CD4-positive, alpha-beta memory T cell (primary cell): ENCODE measurements at regions of chr4 and their contacts with region 1.

Region 1: DNA sequence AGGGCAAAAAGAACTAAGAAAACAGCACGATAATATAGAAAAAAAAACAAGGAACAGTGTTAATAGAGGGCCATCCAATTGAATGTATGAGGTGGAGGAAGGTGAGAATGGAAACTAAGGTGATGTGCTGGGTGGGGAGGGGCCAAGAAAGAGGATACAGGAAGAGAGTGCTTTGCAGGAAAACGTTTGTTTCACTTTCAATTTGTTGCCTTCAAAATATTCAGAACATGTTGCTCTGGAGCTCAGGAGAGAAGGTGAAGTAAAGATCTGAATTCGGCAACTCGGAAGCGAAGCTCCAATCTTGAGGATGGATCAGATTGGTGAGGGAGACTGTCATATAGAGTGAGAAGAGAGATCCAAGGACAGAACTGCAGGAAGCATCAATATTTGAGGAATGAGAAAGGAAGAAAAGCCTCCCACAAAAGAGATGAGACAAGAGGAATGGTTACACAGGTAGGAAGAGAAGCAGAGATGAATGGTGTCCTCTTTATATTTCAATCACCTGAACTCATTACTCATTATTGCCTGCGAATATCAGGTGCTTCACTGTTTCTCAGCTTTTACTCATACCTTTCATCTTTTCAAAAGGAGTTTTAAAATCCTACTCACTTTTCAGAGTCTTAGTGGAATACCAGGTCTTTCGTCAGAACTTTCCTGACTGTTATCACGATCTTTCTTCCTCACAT is 14.7 kb upstream of the SEC24D start:
- DNase-seq: peak; percentile 54 to 72 (median 66)
- H3K4me3 ChIP-seq: peak overlapping the region; percentile 63 to 72
- H3K4me3 Mint-ChIP-seq: peak overlapping the region; percentile 94 to 97 (median 96)
- H3K27ac ChIP-seq: peak overlapping the region; percentile 75
- H3K27ac Mint-ChIP-seq: peak overlapping the region; percentile 83 to 98 (median 96)
- H3K4me1 ChIP-seq: peaks cover 18% of the 10 kb centered on the region
- H3K4me1 Mint-ChIP-seq: peaks cover 19 to 34% (median 26%) of the 10 kb centered on the region in 4 donors
- H3K27me3 ChIP-seq: no peaks in the 10 kb centered on the region
- H3K27me3 Mint-ChIP-seq: peaks cover 2 to 4% of the 10 kb centered on the region in 2 donors

Region 2: GRCh38 chr4:118783887-118784286 is 66.7 kb before region 1 on chr4:
- CTCF ChIA-PET with region 1: no interaction called
- POLR2A ChIA-PET with region 1: no interaction called
- intact Hi-C with region 1: no loop called
- DNase-seq: no peak
- H3K4me3 ChIP-seq: no peak overlapping the region
- H3K4me3 Mint-ChIP-seq: no peak overlapping the region
- H3K27ac ChIP-seq: no peak overlapping the region
- H3K27ac Mint-ChIP-seq: no peak overlapping the region
- H3K4me1 ChIP-seq: no peaks in the 10 kb centered on the region
- H3K4me1 Mint-ChIP-seq: no peaks in the 10 kb centered on the region
- H3K27me3 ChIP-seq: no peaks in the 10 kb centered on the region
- H3K27me3 Mint-ChIP-seq: no peaks in the 10 kb centered on the region

Region 3: GRCh38 chr4:118865091-118865708 is 14.6 kb after region 1 on chr4:
- CTCF ChIA-PET with region 1: interaction called, 21 read pairs
- POLR2A ChIA-PET with region 1: interaction called, 6 read pairs
- intact Hi-C with region 1: no loop called
- DNase-seq: peak in 4 of 5 donors; percentile 22 to 35 (median 26)
- H3K4me3 ChIP-seq: no peak overlapping the region
- H3K4me3 Mint-ChIP-seq: no peak overlapping the region
- H3K27ac ChIP-seq: no peak overlapping the region
- H3K27ac Mint-ChIP-seq: no peak overlapping the region
- H3K4me1 ChIP-seq: no peaks in the 10 kb centered on the region
- H3K4me1 Mint-ChIP-seq: no peaks in the 10 kb centered on the region
- H3K27me3 ChIP-seq: no peaks in the 10 kb centered on the region
- H3K27me3 Mint-ChIP-seq: no peaks in the 10 kb centered on the region